Transverse colon (tissue), 4 donors: ENCODE measurements at regions of chr7 and their contacts with region 1.

Region 1: DNA sequence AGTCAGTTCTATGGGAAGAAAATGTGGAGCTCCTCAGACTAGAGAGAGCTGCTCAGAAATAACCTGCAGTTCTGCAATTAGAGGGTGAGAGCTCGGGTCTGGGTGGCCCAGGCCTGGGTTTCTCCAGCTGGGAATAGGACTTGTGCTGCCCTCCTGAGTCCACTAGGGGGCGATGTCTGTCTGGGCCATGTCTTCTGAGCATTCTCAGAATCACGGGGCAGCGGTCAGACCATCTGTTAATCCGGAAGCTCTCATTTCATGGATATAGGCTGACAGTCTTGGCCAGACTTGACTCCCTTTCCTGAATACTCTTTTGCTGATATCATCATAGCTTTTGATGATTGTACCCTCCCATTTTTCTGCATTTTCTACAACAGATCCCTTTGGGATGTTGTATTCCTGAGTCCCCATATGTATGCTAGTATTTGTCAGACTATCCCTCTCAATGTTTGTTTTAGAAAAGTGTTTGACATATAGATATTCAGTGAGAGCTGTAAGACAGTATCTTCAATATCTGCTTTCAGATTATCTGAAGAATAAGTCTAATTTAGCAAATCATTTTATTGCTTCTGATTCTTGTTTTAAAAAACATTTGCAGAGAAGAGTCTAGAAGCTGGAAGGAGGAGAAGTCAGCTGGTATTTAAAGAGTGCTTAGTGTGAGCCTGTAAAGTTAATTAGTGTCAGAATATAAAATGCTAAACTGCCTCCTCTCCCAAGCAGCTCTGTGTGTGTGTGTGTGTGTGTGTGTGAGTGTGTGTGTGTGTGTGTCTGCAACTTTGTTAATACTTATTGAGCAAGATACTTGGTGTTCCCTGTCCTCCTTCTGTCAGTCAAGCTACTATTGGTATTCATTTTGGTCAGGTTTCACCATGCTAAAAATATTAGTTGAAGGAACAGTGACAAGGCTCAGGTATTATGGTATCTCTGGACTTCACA is 38.0 kb downstream of the STARD3NL start:
- DNase-seq: peak; percentile 85
- H3K4me3 ChIP-seq: no peak overlapping the region
- H3K27ac ChIP-seq: peak overlapping the region; percentile 35 to 65 (median 54)
- H3K4me1 ChIP-seq: peaks cover 10 to 26% (median 12%) of the 10 kb centered on the region in 4 donors
- H3K27me3 ChIP-seq: no peaks in the 10 kb centered on the region
- CTCF ChIP-seq: peak; percentile 86 to 97 (median 90)
- EP300 ChIP-seq: no peak
- POLR2A ChIP-seq: no peak

Region 2: GRCh38 chr7:37901236-37901827 is 314.7 kb before region 1 on chr7:
- in situ Hi-C with region 1: loop called in 2 of 4 experiments (anchors 25 kb)
- intact Hi-C with region 1: loop called (anchors 5 kb)
- DNase-seq: no peak
- H3K4me3 ChIP-seq: no peak overlapping the region
- H3K27ac ChIP-seq: no peak overlapping the region
- H3K4me1 ChIP-seq: no peaks in the 10 kb centered on the region
- H3K27me3 ChIP-seq: no peaks in the 10 kb centered on the region
- CTCF ChIP-seq: peak; percentile 44 to 61 (median 50)
- EP300 ChIP-seq: no peak
- POLR2A ChIP-seq: no peak

Region 3: DNA sequence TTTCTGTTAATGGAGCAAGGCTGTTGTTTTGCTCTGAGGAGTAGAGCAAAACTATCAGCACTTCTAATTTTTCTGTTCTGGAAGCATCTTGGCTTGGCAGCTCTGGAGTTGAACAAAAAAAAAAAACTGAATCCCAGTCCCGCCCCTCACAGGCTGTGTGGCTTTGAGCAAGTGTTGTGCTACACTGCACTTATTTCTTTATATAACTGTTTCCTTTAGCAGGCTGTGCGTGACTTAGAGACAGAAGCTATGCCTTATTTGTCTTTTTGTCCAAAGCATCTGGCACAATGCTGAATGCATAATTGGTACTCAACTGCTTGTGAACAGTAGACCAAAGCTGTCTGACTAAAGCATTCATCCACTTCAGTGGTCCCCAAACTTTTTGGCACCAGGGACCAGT is 319.1 kb after region 1 on chr7:
- in situ Hi-C with region 1: no loop called
- intact Hi-C with region 1: no loop called
- DNase-seq: no peak
- H3K4me3 ChIP-seq: no peak overlapping the region
- H3K27ac ChIP-seq: no peak overlapping the region
- H3K4me1 ChIP-seq: no peaks in the 10 kb centered on the region
- H3K27me3 ChIP-seq: no peaks in the 10 kb centered on the region
- CTCF ChIP-seq: no peak
- EP300 ChIP-seq: no peak
- POLR2A ChIP-seq: no peak